BJ (cell line): ENCODE measurements at regions of chr19 and their contacts with region 1.

Region 1: GRCh38 chr19:3429581-3430080 is 50.7 kb downstream of the SMIM24 start:
- DNase-seq: peak; percentile 38
- H3K4me3 ChIP-seq: no peak overlapping the region
- H3K27me3 ChIP-seq: no peaks in the 10 kb centered on the region
- CTCF ChIP-seq: peak; percentile 97

Region 2: GRCh38 chr19:3330047-3330446 is 99.6 kb before region 1 on chr19:
- CTCF ChIA-PET with region 1: interaction called, 41 read pairs
- POLR2A ChIA-PET with region 1: no interaction called
- DNase-seq: no peak
- H3K4me3 ChIP-seq: no peak overlapping the region
- H3K27me3 ChIP-seq: no peaks in the 10 kb centered on the region
- CTCF ChIP-seq: no peak

Region 3: GRCh38 chr19:3343619-3344502 is 85.8 kb before region 1 on chr19:
- CTCF ChIA-PET with region 1: interaction called, 13 read pairs
- POLR2A ChIA-PET with region 1: no interaction called
- DNase-seq: peak; percentile 46
- H3K4me3 ChIP-seq: no peak overlapping the region
- H3K27me3 ChIP-seq: no peaks in the 10 kb centered on the region
- CTCF ChIP-seq: no peak

Region 4: DNA sequence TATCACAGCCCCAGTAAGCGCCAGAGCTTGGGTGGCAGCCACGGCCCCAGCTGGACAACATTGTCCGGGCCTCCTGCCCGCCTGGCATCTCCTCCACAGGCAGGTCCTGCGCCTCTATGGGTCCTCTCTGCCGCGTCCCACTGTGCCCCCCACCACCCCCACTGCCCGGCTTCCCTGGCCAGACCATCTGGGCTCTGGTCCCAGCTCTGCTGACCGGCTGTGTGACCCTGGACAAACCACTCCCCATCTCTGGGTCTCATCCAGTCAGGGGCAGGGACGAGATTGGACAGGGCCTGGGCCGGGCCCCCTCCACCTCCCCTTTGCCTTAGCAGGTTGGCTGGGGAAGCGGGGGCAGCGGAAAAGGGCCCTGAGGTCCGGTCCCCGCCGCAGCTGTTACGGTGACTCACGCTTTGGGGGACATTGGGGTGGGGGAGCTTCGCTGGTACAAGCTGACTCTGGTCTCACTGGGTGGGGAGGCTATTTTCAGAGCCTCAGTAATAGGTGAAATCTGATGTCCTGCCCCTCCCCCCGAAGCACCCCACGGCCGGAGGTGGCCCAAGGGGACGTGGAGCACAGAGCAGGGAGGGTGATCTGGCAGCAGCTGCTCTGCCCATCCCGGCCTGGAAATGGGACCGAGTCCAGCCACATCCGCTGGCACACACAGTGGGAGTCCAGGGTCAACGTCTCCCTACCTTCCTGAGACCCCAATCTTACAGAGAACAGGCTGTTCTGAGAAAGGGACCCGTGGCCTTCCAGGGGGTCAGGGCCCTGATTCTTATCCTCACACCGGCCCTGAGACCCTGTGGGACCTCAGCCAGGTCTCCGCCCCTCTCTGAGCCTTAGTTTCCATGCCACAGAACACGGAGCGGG is 54.2 kb before region 1 on chr19:
- CTCF ChIA-PET with region 1: interaction called, 12 read pairs
- POLR2A ChIA-PET with region 1: no interaction called
- DNase-seq: no peak
- H3K4me3 ChIP-seq: no peak overlapping the region
- H3K27me3 ChIP-seq: no peaks in the 10 kb centered on the region
- CTCF ChIP-seq: no peak

Region 5: DNA sequence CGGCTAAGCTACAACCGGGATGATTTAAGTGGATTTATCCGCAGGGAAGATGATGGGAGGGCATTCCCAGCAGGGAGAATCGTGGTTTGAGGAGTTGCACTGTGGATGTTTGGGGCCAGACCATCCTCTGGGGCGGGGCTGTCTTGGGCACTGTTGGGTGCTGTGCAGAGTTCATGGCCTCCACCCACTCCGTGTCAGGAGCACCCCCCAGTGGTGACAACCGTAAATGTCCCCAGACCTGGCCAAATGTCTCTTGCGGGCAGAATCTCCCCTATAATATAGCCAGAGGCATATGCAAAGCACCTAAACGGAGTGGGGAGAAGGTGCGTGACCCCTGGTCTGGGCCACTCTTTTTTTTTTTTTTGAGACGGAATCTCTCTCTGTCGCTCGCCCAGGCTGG is 10.5 kb after region 1 on chr19:
- CTCF ChIA-PET with region 1: interaction called, 16 read pairs
- POLR2A ChIA-PET with region 1: no interaction called
- DNase-seq: no peak
- H3K4me3 ChIP-seq: no peak overlapping the region
- H3K27me3 ChIP-seq: no peaks in the 10 kb centered on the region
- CTCF ChIP-seq: peak; percentile 39; the same call in 1 of the 2 replicates

Region 6: DNA sequence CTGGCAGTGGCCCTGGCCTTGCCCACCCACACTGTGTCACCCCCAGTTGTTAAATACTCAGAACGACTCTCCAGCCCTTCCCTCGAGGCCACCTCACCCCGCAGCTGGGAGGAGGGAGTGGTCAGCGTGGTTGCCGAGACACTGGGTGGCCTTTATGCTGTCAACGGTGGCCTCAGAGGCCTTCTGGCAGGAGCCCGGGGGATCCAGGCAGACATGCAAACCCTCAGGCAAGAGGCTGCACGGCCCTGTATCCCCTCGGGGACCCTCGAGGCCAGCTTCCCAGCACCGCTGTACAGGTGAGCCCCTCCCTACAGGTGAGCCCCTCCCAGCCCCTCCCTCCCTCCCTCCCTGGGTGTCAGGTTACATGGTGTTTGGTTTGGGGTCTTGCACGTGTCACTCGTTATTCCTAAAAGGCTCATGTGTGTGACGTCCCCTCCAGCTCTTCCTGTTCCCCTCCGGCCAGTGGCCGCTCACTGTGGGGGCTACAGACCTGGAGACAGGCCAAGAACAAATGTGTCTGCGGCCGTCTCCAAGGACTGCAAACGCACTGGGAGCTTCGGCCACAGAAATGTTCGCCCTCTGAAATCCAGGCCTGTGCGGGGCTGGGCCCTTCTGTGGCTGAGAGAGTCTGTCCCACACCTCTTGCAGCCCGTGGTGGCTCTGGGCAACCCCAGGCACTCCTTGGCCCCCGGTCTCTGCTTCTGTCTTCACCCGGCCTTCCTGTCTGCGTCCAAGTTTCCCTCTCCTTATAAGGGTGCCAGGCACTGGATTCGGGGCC is 109.5 kb after region 1 on chr19 and contains the start of gene TEKTIP1:
- CTCF ChIA-PET with region 1: no interaction called
- POLR2A ChIA-PET with region 1: no interaction called
- DNase-seq: no peak
- H3K4me3 ChIP-seq: no peak within 1 kb of the TSS
- H3K27me3 ChIP-seq: no peaks in the 10 kb centered on the region
- CTCF ChIP-seq: no peak
- polyA plus RNA-seq, gene TEKTIP1: not detected in 2 replicates

Region 7: DNA sequence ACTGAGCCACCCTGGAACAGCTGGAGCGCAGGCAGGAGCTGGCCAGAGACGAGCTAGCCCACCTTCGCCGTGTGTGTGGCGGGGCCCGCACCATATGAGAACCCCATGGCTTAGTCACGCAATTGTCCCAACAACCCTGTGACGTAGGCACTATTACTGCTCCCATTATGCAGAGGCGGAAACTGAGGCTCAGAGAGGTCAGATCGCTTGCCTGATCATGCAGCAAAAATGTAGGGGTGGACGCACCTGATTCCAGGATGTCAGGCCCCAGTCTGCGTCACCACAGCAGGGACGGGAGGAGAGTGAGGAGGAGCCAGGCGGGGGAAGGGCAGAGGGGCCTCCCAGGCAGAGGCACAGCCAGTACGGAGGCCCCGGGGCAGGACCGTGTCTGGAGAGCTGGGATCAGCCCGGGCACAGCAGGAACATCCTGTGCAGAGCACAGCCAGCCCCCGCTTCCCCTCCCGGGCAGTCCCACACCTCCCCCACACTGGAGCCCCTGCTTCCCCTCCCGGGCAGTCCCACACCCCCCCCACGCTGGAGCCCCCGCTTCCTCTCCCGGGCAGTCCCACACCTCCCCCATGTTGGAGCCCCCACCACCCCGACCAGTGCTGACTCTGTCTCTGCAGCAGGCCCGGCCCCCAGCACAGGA is 253.9 kb after region 1 on chr19:
- CTCF ChIA-PET with region 1: no interaction called
- POLR2A ChIA-PET with region 1: no interaction called
- DNase-seq: no peak
- H3K4me3 ChIP-seq: no peak overlapping the region
- H3K27me3 ChIP-seq: no peaks in the 10 kb centered on the region
- CTCF ChIP-seq: no peak